CD8-positive, alpha-beta memory T cell (primary cell): ENCODE measurements at regions of chr20 and their contacts with region 1.

Region 1: DNA sequence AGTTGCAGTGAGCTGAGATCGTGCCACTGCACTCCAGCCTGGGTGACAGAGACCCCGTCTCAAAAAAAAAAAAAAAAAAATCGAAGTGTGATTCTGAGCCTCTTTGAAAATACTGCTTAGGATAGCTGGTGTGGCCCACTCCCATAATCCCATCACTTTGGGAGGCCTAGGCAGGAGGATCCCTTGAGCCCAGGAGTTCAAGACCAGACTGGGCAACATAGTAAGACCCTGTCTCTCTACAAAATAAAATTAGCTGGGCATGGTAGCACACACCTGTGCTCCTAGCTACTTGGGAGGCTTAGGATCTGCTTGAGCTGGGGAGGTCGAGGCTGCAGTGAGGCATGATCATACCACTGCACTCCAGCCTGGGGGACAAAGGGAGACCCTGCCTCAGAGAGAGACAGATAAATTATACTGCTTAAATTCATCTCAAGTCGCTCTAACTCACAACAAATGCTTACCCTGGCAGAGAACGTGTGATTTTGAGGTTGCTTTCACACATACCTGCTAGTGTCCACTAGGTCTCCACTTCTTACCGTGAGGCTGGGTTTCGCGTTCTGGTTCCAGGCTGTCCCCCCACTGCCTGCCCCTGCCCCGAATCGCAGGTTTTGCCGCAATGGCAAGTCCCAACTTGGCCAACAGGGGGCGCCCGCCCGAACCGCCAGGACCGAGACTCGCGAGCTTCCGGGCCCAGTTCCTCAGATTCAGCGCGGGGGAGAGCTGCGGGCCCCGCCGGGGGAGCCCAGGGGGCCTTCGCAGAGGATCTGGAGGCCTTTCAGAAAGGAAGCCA is 12.3 kb upstream of the TMC2 start:
- DNase-seq: peak; percentile 85 to 92 (median 87)
- H3K4me3 ChIP-seq: peak overlapping the region; percentile 84
- H3K4me3 Mint-ChIP-seq: peak overlapping the region; percentile 73 to 96 (median 92)
- H3K27ac ChIP-seq: peak overlapping the region; percentile 83
- H3K27ac Mint-ChIP-seq: peak overlapping the region in 7 of 8 donors; percentile 3 to 86 (median 75)
- H3K4me1 ChIP-seq: peaks cover 5% of the 10 kb centered on the region
- H3K4me1 Mint-ChIP-seq: peaks cover 12 to 19% (median 13%) of the 10 kb centered on the region in 3 donors
- H3K27me3 ChIP-seq: no peaks in the 10 kb centered on the region
- H3K27me3 Mint-ChIP-seq: peaks cover 0 to 1% of the 10 kb centered on the region in 2 donors

Region 2: GRCh38 chr20:2470423-2471193 is 53.5 kb before region 1 on chr20 and contains the start of gene SNRPB:
- CTCF ChIA-PET with region 1: interaction called, 9 read pairs
- POLR2A ChIA-PET with region 1: interaction called, 11 read pairs
- DNase-seq: peak; percentile 93 to 97 (median 94)
- H3K4me3 ChIP-seq: peak within 1 kb of the TSS; percentile 89
- H3K4me3 Mint-ChIP-seq: peak within 1 kb of the TSS; percentile 96 to 99 (median 98)
- H3K27ac ChIP-seq: peak within 1 kb of the TSS; percentile 94
- H3K27ac Mint-ChIP-seq: peak within 1 kb of the TSS; percentile 93 to 100 (median 97)
- H3K4me1 ChIP-seq: peaks cover 30% of the 10 kb centered on the region
- H3K4me1 Mint-ChIP-seq: peaks cover 38 to 48% (median 42%) of the 10 kb centered on the region in 3 donors
- H3K27me3 ChIP-seq: no peaks in the 10 kb centered on the region
- H3K27me3 Mint-ChIP-seq: peaks cover 0 to 3% of the 10 kb centered on the region in 2 donors
- total RNA-seq, gene SNRPB: 423 to 432 TPM

Region 3: GRCh38 chr20:2508631-2509467 is 15.3 kb before region 1 on chr20 and contains the start of gene ZNF343:
- CTCF ChIA-PET with region 1: interaction called, 89 read pairs
- POLR2A ChIA-PET with region 1: interaction called, 4 read pairs
- DNase-seq: peak; percentile 61 to 83 (median 78)
- H3K4me3 ChIP-seq: peak within 1 kb of the TSS; percentile 78
- H3K4me3 Mint-ChIP-seq: peak within 1 kb of the TSS; percentile 90 to 100 (median 98)
- H3K27ac ChIP-seq: peak within 1 kb of the TSS; percentile 74
- H3K27ac Mint-ChIP-seq: peak within 1 kb of the TSS; percentile 77 to 99 (median 96)
- H3K4me1 ChIP-seq: peaks cover 15% of the 10 kb centered on the region
- H3K4me1 Mint-ChIP-seq: peaks cover 17 to 25% (median 18%) of the 10 kb centered on the region in 3 donors
- H3K27me3 ChIP-seq: no peaks in the 10 kb centered on the region
- H3K27me3 Mint-ChIP-seq: peaks cover 6 to 29% of the 10 kb centered on the region in 2 donors
- total RNA-seq, gene ZNF343: 11.3 TPM

Region 4: DNA sequence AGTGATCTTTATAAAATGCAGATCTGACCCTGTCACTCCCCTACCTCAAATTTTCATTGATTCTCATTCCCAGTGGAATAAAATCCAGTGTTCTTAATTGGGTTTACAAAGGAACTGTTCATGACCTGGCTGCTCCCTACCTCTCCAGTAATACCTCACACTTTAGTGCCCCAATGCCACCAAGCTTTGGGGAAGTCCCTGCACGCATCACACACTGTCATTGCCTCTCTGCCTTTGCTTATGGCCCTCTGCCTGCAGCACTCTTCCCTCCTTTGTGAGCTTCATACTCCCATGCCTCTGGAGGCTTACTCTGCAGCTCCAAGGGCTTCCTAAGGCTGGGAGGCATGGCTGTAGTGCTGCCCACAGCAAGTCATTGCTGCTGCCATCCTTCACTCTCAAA is 69.6 kb after region 1 on chr20:
- CTCF ChIA-PET with region 1: no interaction called
- POLR2A ChIA-PET with region 1: no interaction called
- DNase-seq: no peak
- H3K4me3 ChIP-seq: no peak overlapping the region
- H3K4me3 Mint-ChIP-seq: no peak overlapping the region
- H3K27ac ChIP-seq: no peak overlapping the region
- H3K27ac Mint-ChIP-seq: no peak overlapping the region
- H3K4me1 ChIP-seq: no peaks in the 10 kb centered on the region
- H3K4me1 Mint-ChIP-seq: no peaks in the 10 kb centered on the region
- H3K27me3 ChIP-seq: no peaks in the 10 kb centered on the region
- H3K27me3 Mint-ChIP-seq: peaks cover 20 to 54% of the 10 kb centered on the region in 2 donors